ENCODE measurements at regions of chr12 and their contacts with region 1.

Region 1: DNA sequence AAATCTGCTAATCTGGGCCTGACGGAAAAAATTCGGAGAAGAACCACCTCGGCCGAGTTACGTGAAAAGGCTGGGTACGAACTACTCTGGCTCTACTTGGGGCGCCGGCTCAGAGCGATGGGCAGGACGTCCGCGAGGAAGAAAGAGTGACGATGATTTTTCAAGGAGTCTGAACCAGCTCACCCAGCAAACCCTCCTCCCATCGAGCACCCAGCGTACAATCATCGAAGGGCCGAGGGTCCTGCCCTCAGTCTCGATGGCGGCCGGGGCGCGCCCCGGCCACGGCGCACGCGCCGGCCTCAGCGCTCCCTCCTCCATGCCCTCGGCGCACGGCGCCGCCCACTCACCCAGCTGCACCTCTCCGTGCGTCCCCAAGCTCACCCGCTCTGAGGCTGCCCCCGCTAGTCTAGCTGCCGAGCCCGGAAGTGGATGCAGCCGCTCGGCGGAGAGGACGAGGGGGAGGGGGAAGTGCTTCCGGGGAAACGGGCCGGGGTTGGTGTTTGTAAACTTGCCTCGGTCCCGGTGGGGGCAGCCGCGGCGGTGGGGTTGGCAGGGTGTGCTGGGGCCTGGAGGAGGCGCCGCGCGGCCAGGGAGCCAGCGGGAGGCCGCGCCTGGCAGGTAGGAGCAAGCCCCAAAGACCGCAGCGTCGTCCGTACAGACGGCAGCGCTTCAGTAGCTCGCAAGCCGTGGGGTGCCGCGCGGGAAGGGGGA is at the starts of genes CSAD and ZNF740:
- DNase-seq: peak; percentile 96
- H3K4me3 ChIP-seq: peak within 1 kb of the TSS; percentile 60 to 91 (median 73)
- H3K27ac ChIP-seq: peak within 1 kb of the TSS; percentile 50
- H3K4me1 ChIP-seq: peaks cover 22% of the 10 kb centered on the region
- H3K27me3 ChIP-seq: no peaks in the 10 kb centered on the region
- CTCF ChIP-seq: no peak
- POLR2A ChIP-seq: peak; percentile 87
- total RNA-seq, gene CSAD: 21.1 and 22.0 TPM in 2 replicates
- total RNA-seq, gene ZNF740: 34.9 and 38.1 TPM in 2 replicates

Region 2: GRCh38 chr12:52903285-52903854 is 277.0 kb before region 1 on chr12:
- CTCF ChIA-PET with region 1: no interaction called
- POLR2A ChIA-PET with region 1: no interaction called
- dilution Hi-C with region 1: no loop called
- intact Hi-C with region 1: no loop called
- DNase-seq: peak; percentile 75
- H3K4me3 ChIP-seq: peak overlapping the region in 2 of 3 experiments; percentile 13 to 44
- H3K27ac ChIP-seq: peak overlapping the region; percentile 69
- H3K4me1 ChIP-seq: peaks cover 10% of the 10 kb centered on the region
- H3K27me3 ChIP-seq: no peaks in the 10 kb centered on the region
- CTCF ChIP-seq: no peak
- POLR2A ChIP-seq: no peak

Region 3: DNA sequence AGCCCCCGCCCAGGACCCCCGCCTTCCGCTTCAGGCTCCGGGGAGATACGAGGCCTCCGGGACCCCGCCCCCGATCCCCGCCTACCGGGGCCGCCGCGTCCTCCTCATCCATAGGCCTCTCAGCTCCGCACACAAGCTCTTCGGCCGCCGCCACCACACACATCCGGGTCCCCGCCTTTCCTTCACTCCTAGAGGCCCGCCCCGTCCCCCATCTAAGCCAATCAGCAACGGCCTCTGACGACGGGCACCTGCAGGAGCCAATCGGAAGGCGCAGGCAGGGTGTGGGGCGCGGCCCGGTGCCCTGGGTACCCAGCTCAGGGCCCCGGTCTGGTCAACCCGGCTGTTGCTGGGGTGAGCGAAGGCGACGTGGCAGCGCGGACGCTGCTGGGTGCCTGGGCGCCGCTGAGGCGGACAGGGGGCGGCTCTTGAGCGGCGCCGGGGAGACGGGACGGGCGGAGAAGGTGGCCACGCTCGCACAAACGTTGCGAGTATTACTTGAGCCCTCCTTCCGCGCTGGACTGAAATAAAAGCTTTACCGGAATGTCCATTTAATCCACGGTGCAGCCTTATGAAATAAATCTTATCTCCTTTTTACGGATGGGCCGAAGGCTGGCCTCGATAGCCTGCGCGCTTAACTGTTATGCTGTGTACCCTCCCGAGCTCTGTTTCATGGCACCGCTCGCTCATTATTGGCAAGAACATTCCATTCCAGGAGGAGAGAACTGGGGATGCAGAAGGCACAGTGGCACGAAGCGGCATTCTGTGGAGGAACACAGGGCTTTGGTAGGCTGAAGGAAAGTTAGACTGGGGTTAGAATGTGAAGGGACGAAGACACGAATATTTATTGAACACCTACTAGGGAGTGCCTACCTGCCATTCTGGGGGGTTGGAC is 100.9 kb before region 1 on chr12 and contains the start of gene SPRYD3:
- CTCF ChIA-PET with region 1: interaction called, 4 read pairs
- POLR2A ChIA-PET with region 1: interaction called, 4 read pairs
- dilution Hi-C with region 1: no loop called
- intact Hi-C with region 1: loop called (anchors 2 kb)
- DNase-seq: peak; percentile 98
- H3K4me3 ChIP-seq: peak within 1 kb of the TSS; percentile 68 to 87 (median 80)
- H3K27ac ChIP-seq: peak within 1 kb of the TSS; percentile 52
- H3K4me1 ChIP-seq: peaks cover 9% of the 10 kb centered on the region
- H3K27me3 ChIP-seq: no peaks in the 10 kb centered on the region
- CTCF ChIP-seq: no peak
- POLR2A ChIP-seq: peak; percentile 98
- total RNA-seq, gene SPRYD3: 31.7 and 39.2 TPM in 2 replicates

Region 4: DNA sequence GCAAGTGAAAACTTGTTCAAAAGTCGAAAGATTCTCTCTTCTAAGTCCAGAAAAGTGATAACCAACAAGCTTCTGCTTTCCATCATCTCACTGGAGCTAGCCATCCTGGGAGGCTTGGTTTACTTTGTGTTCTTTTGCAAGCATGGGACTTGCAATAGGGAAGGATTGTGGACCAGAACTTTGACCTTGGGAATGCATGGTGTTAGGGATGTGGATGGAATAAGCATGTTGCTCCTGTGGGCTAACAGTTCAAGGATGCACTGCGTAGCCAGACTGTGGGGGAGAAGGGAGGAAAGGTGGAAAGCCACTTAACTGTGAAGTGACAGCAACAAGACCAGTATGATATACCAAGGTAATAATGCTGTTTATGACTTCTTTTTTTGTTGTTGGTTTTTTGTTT is 48.5 kb before region 1 on chr12:
- CTCF ChIA-PET with region 1: no interaction called
- POLR2A ChIA-PET with region 1: no interaction called
- dilution Hi-C with region 1: loop called (anchors 10 kb)
- intact Hi-C with region 1: no loop called
- DNase-seq: no peak
- H3K4me3 ChIP-seq: no peak overlapping the region
- H3K27ac ChIP-seq: no peak overlapping the region
- H3K4me1 ChIP-seq: no peaks in the 10 kb centered on the region
- H3K27me3 ChIP-seq: peaks cover 3 to 9% of the 10 kb centered on the region in 2 experiments
- CTCF ChIP-seq: no peak
- POLR2A ChIP-seq: no peak